Prostate gland (tissue), 2 donors: ENCODE measurements at regions of chr13 and their contacts with region 1.

Region 1: DNA sequence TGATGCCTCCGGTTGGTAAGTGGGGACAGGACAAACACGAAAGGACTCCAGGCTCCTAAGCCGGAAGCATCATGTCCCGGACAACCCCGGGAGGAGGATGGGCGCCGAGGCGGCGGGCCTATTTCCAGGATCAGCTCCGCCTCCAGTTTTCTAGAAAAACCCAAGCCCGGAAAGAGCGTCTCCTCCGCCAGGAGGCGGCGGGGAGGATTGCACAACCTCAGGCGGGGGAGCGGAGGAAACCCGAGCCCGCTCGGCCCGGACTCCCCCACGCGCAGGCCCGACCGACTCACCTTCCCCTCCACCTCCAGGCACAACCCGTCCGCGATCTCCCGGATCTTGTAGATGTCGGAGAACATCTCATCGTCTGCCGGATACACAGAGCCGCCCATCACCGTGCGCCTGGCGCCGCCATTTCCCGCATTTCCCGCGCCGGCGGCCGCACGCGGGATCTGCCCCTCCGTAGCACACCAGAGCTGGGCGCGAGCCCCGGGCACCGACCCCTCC is 509 bp downstream of the TPT1 start:
- DNase-seq: peak; percentile 91
- H3K4me3 ChIP-seq: peak overlapping the region; percentile 96 to 100
- H3K27ac ChIP-seq: peak overlapping the region; percentile 100
- H3K4me1 ChIP-seq: peaks cover 16% of the 10 kb centered on the region
- H3K27me3 ChIP-seq: no peaks in the 10 kb centered on the region
- CTCF ChIP-seq: peak; percentile 28 to 91 (median 56)
- POLR2A ChIP-seq: peak; percentile 86

Region 2: GRCh38 chr13:45417790-45418534 is 77.5 kb after region 1 on chr13 and contains the start of gene SLC25A30:
- intact Hi-C with region 1: loop called (anchors 5 kb)
- DNase-seq: peak; percentile 97
- H3K4me3 ChIP-seq: peak within 1 kb of the TSS; percentile 67 to 81
- H3K27ac ChIP-seq: peak within 1 kb of the TSS; percentile 89 to 90
- H3K4me1 ChIP-seq: peaks cover 8% of the 10 kb centered on the region
- H3K27me3 ChIP-seq: no peaks in the 10 kb centered on the region
- CTCF ChIP-seq: no peak
- POLR2A ChIP-seq: peak; percentile 80
- total RNA-seq, gene SLC25A30: 12.6 to 14.2 TPM

Region 3: GRCh38 chr13:45781553-45782326 is 441.3 kb after region 1 on chr13:
- intact Hi-C with region 1: no loop called
- DNase-seq: no peak
- H3K4me3 ChIP-seq: no peak overlapping the region
- H3K27ac ChIP-seq: no peak overlapping the region
- H3K4me1 ChIP-seq: no peaks in the 10 kb centered on the region
- H3K27me3 ChIP-seq: no peaks in the 10 kb centered on the region
- CTCF ChIP-seq: no peak
- POLR2A ChIP-seq: no peak